Posterior vena cava (tissue), 2 donors: ENCODE measurements at regions of chr1 and their contacts with region 1.

Region 1: DNA sequence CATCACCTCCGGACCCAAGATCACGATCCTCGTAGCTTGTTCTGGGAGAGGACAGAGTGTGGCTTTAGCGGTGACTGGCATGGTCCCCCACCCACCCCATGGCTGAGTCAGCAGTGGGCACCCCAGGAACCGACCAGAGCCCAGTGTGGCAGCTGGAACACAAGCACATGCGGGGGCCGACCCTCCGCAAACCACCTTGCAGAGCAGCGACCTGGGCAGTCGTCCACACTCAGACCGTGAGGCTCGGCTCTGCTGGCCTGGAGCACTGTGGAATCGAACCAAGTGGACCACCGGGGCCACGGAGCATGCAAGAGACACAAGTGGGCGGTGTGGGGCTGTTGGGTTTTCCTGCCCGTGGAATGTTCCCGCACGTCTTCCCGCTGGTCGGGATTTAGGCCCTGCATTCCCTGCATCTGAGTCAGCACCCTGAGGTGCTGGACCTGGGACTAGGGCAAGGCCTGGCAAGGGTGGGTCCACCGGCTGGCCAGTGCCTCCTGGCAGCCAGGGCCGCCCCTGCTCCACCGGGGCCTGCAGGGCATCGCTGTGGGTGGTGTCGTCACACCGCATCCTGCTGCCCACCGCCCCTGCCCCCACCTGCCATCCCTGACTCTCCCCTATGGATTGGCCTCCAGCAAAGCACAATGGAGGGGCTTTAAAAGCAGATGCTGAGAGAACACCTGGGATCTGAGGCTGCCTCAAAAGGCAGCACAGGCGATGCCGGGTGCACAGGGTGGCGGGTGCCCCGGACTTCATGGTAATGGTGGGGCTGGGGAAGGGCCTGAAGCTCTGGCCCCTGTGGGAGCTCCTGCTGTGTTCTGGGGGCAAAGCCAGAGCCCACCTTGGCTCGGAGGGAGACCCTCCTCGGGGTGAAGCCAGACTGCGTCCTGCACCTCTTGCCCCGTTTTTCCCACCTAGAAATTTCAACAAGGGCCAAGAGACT is 18.5 kb downstream of the MORN1 start:
- DNase-seq: peak; percentile 78

Region 2: GRCh38 chr1:2314803-2315673 is 57.8 kb before region 1 on chr1:
- intact Hi-C with region 1: no loop called
- DNase-seq: no peak

Region 3: DNA sequence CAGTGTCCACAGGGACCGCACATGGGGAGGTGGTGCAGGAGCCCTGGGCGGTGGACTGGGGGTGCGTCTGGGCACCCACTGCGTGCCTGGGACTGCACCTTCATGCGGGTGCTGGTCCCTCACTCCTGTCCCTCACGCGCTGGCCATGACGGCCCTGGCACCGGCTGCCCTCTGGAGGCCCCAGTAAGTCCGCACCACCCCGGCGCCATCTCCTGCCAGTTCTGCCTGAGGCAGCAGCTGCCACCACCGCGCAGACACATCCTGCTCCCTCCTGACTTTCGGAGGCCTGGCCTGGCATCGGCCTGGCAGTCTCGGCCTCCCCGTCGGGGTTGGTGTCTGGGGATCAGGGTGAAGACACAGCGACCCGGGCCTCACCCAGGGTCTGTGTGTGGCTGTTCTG is 46.3 kb before region 1 on chr1:
- intact Hi-C with region 1: loop called in 1 of 2 experiments (anchors 5 kb)
- DNase-seq: no peak

Region 4: GRCh38 chr1:2335721-2336455 is 36.9 kb before region 1 on chr1:
- intact Hi-C with region 1: loop called in 1 of 2 experiments (anchors 5 kb)
- DNase-seq: no peak